PC-9 (cell line): ENCODE measurements at regions of chr1 and their contacts with region 1.

Region 1: DNA sequence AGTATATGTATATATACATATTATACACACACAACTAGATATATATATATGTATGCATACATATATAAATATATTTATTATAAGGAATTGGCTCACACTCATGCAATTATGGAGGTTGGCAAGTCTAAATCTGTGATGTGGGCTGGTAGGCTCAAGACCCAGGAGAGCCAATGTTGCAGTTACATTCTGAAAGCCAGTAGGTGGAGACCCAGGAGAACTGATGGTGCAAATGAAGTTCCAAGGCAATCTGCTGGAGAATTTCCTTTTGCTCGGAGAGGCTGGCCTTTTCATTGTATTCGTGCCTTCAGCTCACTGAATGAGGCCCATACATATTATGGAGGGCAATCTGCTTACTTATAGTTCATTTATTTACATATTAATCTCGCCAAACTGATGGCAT is 9.4 kb downstream of the IVL start:
- DNase-seq: no peak
- H3K4me3 ChIP-seq: no peak overlapping the region
- H3K27ac ChIP-seq: no peak overlapping the region
- H3K4me1 ChIP-seq: no peaks in the 10 kb centered on the region
- H3K27me3 ChIP-seq: no peaks in the 10 kb centered on the region
- CTCF ChIP-seq: peak; percentile 46

Region 2: GRCh38 chr1:153192697-153193096 is 274.9 kb after region 1 on chr1:
- CTCF ChIA-PET with region 1: no interaction called
- POLR2A ChIA-PET with region 1: no interaction called
- intact Hi-C with region 1: loop called (anchors 5 kb)
- DNase-seq: peak in 1 of 2 experiments; percentile 24
- H3K4me3 ChIP-seq: no peak overlapping the region
- H3K27ac ChIP-seq: no peak overlapping the region
- H3K4me1 ChIP-seq: no peaks in the 10 kb centered on the region
- H3K27me3 ChIP-seq: peaks cover 15% of the 10 kb centered on the region; the same call in 1 of the 2 replicates
- CTCF ChIP-seq: peak; percentile 84

Region 3: GRCh38 chr1:153842006-153842471 is 924.2 kb after region 1 on chr1:
- CTCF ChIA-PET with region 1: no interaction called
- POLR2A ChIA-PET with region 1: no interaction called
- intact Hi-C with region 1: no loop called
- DNase-seq: no peak
- H3K4me3 ChIP-seq: no peak overlapping the region
- H3K27ac ChIP-seq: no peak overlapping the region
- H3K4me1 ChIP-seq: no peaks in the 10 kb centered on the region
- H3K27me3 ChIP-seq: no peaks in the 10 kb centered on the region
- CTCF ChIP-seq: no peak